ENCODE measurements at regions of chr6 and their contacts with region 1.

Region 1: DNA sequence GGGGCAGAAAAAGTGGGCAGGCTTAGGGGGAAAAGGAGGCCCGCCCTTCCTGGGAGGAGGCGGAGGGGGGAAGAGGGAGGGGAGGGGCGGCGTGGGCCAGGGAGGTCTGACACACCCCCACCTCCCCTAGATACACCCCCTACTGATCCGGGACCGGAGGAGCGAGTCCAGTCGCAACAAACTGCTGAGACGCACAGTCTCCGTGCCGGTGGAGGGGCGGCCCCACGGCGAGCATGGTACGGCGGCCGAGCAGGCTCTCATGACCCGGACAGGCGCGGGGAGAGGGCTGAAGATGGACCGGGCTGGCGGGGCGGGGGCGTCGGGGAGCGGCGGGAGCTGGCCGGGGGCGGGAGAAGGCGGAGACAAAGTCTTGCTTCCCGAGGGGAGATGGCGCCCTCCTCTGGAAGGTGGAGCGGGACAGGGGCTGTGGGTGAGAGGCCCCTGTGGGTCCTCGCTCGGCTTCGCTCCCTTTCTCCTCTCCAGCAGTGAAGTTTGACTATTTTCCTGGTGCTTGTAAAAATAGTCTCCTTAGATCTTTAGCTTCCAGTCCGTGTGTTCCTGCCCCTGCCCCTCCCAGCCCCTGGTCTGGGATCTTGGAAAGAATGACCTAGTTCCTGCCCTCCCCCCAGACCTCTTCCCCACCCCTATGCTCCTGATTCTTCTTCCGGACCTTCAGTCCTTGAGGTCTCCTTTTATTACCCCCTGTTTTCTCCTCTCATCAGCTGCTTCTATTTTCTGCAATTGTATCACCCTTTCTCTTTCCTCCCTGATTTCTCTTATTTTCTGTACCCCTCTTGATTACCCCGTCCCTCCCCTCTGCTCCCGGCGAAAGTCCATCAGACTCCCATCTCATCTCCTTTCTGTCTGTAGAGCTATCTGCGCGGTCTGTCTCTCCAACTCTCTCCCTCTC is 6.1 kb downstream of the SYNGAP1 start:
- DNase-seq: peak; percentile 65 to 91 (median 80)
- ATAC-seq: peak; percentile 48
- H3K4me3 ChIP-seq: peak overlapping the region; percentile 71
- H3K4me3 Mint-ChIP-seq: peak overlapping the region; percentile 94
- H3K27ac ChIP-seq: peak overlapping the region; percentile 86 to 92
- H3K27ac Mint-ChIP-seq: peak overlapping the region; percentile 99
- H3K4me1 ChIP-seq: peaks cover 60% of the 10 kb centered on the region
- H3K4me1 Mint-ChIP-seq: peaks cover 80% of the 10 kb centered on the region
- H3K27me3 ChIP-seq: no peaks in the 10 kb centered on the region
- H3K27me3 Mint-ChIP-seq: no peaks in the 10 kb centered on the region
- CTCF ChIP-seq: peak; percentile 65

Region 2: GRCh38 chr6:33299237-33299944 is 126.5 kb before region 1 on chr6:
- CTCF ChIA-PET with region 1: interaction called, 4 read pairs
- POLR2A ChIA-PET with region 1: interaction called, 10 read pairs
- intact Hi-C with region 1: no loop called
- DNase-seq: peak; percentile 89 to 97 (median 92)
- ATAC-seq: peak; percentile 84
- H3K4me3 ChIP-seq: peak overlapping the region; percentile 91
- H3K4me3 Mint-ChIP-seq: peak overlapping the region; percentile 98
- H3K27ac ChIP-seq: peak overlapping the region; percentile 90 to 96
- H3K27ac Mint-ChIP-seq: peak overlapping the region; percentile 99
- H3K4me1 ChIP-seq: peaks cover 34% of the 10 kb centered on the region
- H3K4me1 Mint-ChIP-seq: peaks cover 32% of the 10 kb centered on the region
- H3K27me3 ChIP-seq: no peaks in the 10 kb centered on the region
- H3K27me3 Mint-ChIP-seq: no peaks in the 10 kb centered on the region
- CTCF ChIP-seq: peak; percentile 74

Region 3: GRCh38 chr6:33410050-33410710 is 15.7 kb before region 1 on chr6:
- CTCF ChIA-PET with region 1: interaction called, 10 read pairs
- POLR2A ChIA-PET with region 1: interaction called, 19 read pairs
- intact Hi-C with region 1: loop called (anchors 1 to 2 kb)
- DNase-seq: peak; percentile 92 to 99 (median 98)
- ATAC-seq: peak; percentile 71
- H3K4me3 ChIP-seq: peak overlapping the region; percentile 81
- H3K4me3 Mint-ChIP-seq: peak overlapping the region; percentile 95
- H3K27ac ChIP-seq: peak overlapping the region; percentile 95 to 99
- H3K27ac Mint-ChIP-seq: peak overlapping the region; percentile 98
- H3K4me1 ChIP-seq: peaks cover 64% of the 10 kb centered on the region
- H3K4me1 Mint-ChIP-seq: peaks cover 57% of the 10 kb centered on the region
- H3K27me3 ChIP-seq: no peaks in the 10 kb centered on the region
- H3K27me3 Mint-ChIP-seq: no peaks in the 10 kb centered on the region
- CTCF ChIP-seq: no peak

Measured in CD4-positive, alpha-beta T cell (primary cell).